Prostate gland (tissue), 2 donors: ENCODE measurements at regions of chr4 and their contacts with region 1.

Region 1: GRCh38 chr4:168995537-168996295 is 14.3 kb downstream of the CBR4 start:
- DNase-seq: no peak
- H3K4me3 ChIP-seq: no peak overlapping the region
- H3K27ac ChIP-seq: no peak overlapping the region
- H3K4me1 ChIP-seq: no peaks in the 10 kb centered on the region
- H3K27me3 ChIP-seq: no peaks in the 10 kb centered on the region
- CTCF ChIP-seq: peak in 2 of 4 experiments; percentile 40 to 45
- POLR2A ChIP-seq: no peak

Region 2: DNA sequence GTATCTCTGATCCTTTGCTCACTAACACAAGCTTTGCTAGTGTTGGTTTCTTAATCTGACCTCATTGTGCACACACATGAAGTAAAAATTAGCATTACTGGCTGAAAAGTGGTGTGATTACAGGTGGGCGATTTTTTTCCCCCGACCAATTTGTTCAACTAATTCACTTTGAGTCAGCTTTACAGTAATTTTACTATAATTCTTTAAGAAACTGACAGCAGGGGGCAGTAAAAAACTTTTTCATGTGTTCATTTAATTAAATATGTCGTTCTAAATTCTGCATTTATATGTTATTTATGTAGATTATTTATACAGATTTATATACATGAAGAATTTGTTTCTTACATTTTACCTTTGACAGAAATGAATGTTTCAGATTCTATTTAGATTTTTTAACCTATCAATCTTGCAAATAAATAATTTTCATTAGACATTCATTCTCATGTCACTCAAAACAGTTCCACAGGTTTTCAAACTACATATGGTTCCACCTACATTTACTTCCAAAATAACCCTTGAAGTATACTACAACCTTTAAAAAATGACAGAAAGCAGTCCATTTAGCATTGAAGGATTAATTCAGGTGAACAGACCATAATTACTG is 481.4 kb before region 1 on chr4:
- intact Hi-C with region 1: loop called (anchors 10 kb)
- DNase-seq: no peak
- H3K4me3 ChIP-seq: no peak overlapping the region
- H3K27ac ChIP-seq: no peak overlapping the region
- H3K4me1 ChIP-seq: no peaks in the 10 kb centered on the region
- H3K27me3 ChIP-seq: no peaks in the 10 kb centered on the region
- CTCF ChIP-seq: peak; percentile 30 to 48 (median 44)
- POLR2A ChIP-seq: no peak

Region 3: DNA sequence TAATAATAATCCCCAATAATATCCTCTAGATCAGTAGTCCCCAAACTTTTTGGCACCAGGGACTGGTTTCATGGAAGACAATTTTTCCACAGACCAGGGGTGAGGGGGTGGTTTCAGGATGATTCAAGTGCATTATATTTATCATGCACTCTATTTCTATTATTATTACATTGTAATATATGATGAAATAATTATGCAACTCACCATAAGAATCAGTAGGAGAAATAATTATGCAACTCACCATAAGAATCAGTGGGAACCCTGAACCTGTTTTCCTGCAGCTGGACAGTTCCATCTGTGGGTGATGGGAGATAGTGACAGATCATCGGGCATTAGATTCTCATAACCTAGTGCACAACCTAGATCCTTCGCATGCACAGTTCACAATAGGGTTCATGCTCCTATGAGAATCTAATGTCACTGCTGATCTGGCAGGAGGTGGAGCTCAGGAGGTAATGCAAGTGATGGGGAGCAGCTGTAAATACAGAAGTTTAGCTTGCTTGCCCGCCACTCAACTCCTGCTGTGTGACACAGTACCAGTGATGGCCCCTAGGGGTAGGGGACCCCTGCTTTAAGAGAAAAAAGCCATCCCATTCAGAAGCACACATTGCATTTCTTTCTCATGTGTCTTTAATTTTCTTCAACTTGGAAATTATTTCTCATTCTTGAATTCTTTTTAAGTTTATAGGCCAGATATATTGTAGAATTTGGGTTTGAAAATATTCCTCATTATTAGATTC is 291.0 kb after region 1 on chr4:
- intact Hi-C with region 1: no loop called
- DNase-seq: no peak
- H3K4me3 ChIP-seq: no peak overlapping the region
- H3K27ac ChIP-seq: no peak overlapping the region
- H3K4me1 ChIP-seq: no peaks in the 10 kb centered on the region
- H3K27me3 ChIP-seq: no peaks in the 10 kb centered on the region
- CTCF ChIP-seq: no peak
- POLR2A ChIP-seq: no peak